ENCODE measurements at regions of chr2 and their contacts with region 1.

Region 1: GRCh38 chr2:7950035-7950612 is 731.7 kb upstream of the ID2 start:
- DNase-seq: no peak
- H3K4me3 ChIP-seq: no peak overlapping the region
- H3K27ac ChIP-seq: no peak overlapping the region
- H3K4me1 ChIP-seq: no peaks in the 10 kb centered on the region
- H3K27me3 ChIP-seq: no peaks in the 10 kb centered on the region
- CTCF ChIP-seq: no peak

Region 2: DNA sequence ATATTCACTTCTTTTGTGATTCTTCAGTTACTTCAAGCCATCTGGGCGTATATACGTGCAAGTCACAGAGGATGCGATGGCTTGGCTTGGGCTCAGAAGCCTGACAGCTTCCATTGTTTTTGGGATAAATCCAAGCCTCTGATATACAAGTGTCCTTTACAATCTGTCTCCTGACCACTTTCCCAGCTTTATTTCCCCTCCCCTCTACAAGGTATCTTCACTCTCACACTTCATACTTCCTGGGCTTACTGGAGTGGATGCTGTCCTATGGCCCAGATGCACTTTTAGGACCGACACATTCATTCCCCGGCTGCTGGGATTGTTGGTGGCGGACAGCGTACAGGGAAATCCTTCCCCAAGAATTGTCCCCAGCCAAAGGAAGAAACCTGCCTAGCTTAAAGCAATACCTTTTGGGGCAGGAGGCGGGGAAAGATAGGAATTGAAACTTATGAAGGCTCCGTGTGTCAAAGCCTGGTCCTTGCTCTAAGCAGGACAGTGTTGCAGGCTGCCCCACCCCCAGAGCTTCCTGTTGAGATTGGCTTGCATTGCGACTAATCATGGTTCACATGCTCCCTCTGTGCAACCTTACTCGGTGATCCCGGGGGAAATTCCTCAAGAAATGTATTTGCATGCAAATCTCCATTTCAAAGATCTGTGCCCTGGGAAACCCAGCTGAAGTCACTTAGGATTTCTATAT is 71.2 kb before region 1 on chr2:
- CTCF ChIA-PET with region 1: no interaction called
- dilution Hi-C with region 1: no loop called
- in situ Hi-C with region 1: no loop called
- intact Hi-C with region 1: no loop called
- DNase-seq: no peak
- H3K4me3 ChIP-seq: no peak overlapping the region
- H3K27ac ChIP-seq: no peak overlapping the region
- H3K4me1 ChIP-seq: no peaks in the 10 kb centered on the region
- H3K27me3 ChIP-seq: no peaks in the 10 kb centered on the region
- CTCF ChIP-seq: no peak

Region 3: DNA sequence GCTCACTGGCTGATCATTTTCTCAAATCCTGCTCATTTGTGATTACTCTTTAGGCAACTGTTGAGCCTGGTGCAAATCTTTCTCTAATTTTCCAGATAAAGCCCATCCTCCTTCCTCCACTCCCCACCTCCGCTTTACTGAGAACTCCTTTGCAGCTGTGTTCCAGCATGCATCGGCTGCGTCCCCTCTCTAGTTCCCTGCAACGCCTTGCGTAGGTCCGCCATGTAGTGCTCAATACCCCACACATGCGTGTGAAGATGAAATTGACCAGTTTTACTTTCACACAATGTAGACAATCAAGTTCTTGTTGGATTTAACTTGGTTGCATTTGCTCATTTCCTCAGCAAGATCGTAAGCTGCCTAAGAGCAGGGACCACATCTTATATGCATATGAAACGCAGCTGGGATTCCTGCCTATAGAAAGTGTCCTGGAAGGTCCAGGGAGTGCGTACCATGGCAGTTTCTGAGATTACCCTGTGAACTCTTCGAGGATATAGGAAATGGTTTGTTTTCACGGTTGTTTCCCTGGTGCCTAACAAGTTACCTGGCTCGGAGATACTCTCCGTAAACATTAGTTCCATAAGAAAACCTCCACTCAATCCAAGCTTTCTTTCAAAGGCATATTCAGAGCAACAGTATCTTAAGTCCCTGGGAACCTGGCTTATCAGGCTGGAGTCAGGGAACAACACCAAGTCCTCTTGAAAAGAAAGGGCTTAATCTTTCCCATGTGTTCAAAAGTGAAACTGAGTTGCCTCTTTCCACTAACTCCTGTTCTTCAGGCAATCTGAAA is 34.6 kb before region 1 on chr2:
- CTCF ChIA-PET with region 1: no interaction called
- dilution Hi-C with region 1: loop called (anchors 5 kb)
- in situ Hi-C with region 1: no loop called
- intact Hi-C with region 1: no loop called
- DNase-seq: no peak
- H3K4me3 ChIP-seq: no peak overlapping the region
- H3K27ac ChIP-seq: no peak overlapping the region
- H3K4me1 ChIP-seq: no peaks in the 10 kb centered on the region
- H3K27me3 ChIP-seq: no peaks in the 10 kb centered on the region
- CTCF ChIP-seq: no peak

Region 4: GRCh38 chr2:8115966-8116365 is 165.8 kb after region 1 on chr2:
- CTCF ChIA-PET with region 1: no interaction called
- dilution Hi-C with region 1: no loop called
- in situ Hi-C with region 1: no loop called
- intact Hi-C with region 1: no loop called
- DNase-seq: no peak
- H3K4me3 ChIP-seq: no peak overlapping the region
- H3K27ac ChIP-seq: no peak overlapping the region
- H3K4me1 ChIP-seq: peaks cover 21% of the 10 kb centered on the region
- H3K27me3 ChIP-seq: no peaks in the 10 kb centered on the region
- CTCF ChIP-seq: no peak

Region 5: GRCh38 chr2:8125741-8126711 is 175.9 kb after region 1 on chr2:
- CTCF ChIA-PET with region 1: no interaction called
- dilution Hi-C with region 1: no loop called
- in situ Hi-C with region 1: no loop called
- intact Hi-C with region 1: no loop called
- DNase-seq: no peak
- H3K4me3 ChIP-seq: no peak overlapping the region
- H3K27ac ChIP-seq: no peak overlapping the region
- H3K4me1 ChIP-seq: peaks cover 4% of the 10 kb centered on the region
- H3K27me3 ChIP-seq: no peaks in the 10 kb centered on the region
- CTCF ChIP-seq: no peak